Right ventricle myocardium superior (tissue), 1 donor: ENCODE measurements at regions of chr15 and their contacts with region 1.

Region 1: DNA sequence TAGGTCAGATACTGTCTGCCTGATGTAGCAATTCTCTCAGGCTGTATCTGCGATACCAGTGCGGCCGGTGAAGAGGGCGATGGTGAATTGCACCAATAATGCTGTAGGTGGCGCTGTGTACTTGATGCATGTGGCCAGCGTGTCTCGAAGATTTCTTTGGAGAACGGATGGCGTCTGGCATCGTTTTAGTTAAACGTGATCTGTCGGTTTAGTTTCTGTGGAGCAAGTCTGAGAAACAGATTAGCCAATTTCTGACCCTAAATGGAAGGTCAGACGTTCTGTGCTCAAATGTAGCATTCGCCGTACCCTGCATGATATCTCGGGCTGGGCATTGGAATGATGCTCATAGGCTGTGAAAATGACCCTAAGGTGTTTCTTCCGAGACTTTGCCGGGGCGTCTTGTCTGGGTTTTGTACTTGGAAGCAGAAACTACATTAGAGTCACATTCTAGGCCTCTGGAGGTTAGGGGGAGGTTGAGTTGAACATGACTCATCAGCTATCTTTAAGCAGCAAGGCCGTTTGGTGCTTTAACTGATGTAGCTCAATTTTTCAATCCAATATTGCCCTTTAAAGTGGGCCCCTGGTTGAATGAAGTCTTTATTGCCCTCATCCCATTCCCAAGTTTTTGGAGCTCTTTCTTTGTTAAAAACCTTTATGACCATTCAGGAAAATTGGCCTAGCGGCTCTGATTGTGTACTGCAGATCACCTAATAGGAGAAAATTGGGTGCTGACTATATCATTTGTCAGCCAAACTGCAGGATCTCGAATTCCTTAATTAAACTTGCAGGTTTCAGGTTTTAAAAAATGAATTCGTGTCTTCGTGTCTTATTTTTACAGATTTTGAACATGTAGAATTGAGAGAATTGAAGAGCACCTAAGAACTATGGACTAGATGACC is 80.0 kb downstream of the SQOR start:
- DNase-seq: peak; percentile 66
- ATAC-seq: peak; percentile 88

Region 2: GRCh38 chr15:45790325-45790943 is 75.6 kb after region 1 on chr15:
- intact Hi-C with region 1: loop called (anchors 5 kb)
- DNase-seq: no peak
- ATAC-seq: peak; percentile 68